ENCODE measurements at regions of chr1 and their contacts with region 1.

Region 1: DNA sequence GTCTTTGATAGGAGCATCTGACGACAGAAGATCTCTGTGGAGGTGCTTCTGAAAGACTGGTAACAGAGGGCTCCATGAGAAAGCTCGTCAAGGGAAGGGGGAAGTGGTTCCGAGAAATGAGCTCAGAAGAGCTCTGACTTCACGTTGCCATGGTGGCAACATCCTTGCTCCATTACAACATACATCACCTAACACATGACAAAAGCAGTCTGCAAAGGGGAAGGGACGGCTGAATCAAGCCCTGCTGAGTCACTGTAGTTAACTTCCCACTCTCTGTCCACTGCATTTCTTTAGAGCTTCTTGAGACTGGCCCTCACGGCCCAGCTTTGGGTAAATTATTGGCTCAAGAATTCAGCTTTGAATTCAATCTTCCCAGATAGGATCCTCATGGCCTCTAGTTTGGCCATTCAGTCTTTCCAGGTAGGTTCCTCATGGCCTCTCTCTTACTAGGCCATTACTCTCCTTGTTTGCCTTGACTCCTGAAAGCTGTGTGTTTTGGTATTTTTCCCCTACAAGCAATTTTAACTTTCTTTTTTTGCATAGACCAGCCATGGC is 88.0 kb upstream of the ZNF648 start:
- DNase-seq: peak; percentile 37
- H3K4me3 ChIP-seq: no peak overlapping the region
- H3K27ac ChIP-seq: peak overlapping the region in 2 of 4 donors; percentile 52 to 87
- H3K4me1 ChIP-seq: peaks cover 7 to 15% (median 13%) of the 10 kb centered on the region in 4 donors
- H3K27me3 ChIP-seq: no peaks in the 10 kb centered on the region
- CTCF ChIP-seq: no peak
- EP300 ChIP-seq: no peak
- POLR2A ChIP-seq: no peak

Region 2: GRCh38 chr1:182198049-182198501 is 48.6 kb after region 1 on chr1:
- in situ Hi-C with region 1: loop called in 1 of 4 experiments (anchors 5 kb)
- intact Hi-C with region 1: no loop called
- DNase-seq: no peak
- H3K4me3 ChIP-seq: no peak overlapping the region
- H3K27ac ChIP-seq: peak overlapping the region; percentile 37 to 61 (median 52)
- H3K4me1 ChIP-seq: no peaks in the 10 kb centered on the region
- H3K27me3 ChIP-seq: no peaks in the 10 kb centered on the region
- CTCF ChIP-seq: peak in 3 of 5 experiments; percentile 17 to 37 (median 25)
- EP300 ChIP-seq: no peak
- POLR2A ChIP-seq: no peak

Region 3: GRCh38 chr1:182301467-182302198 is 152.1 kb after region 1 on chr1:
- in situ Hi-C with region 1: no loop called
- intact Hi-C with region 1: no loop called
- DNase-seq: peak; percentile 48
- H3K4me3 ChIP-seq: no peak overlapping the region
- H3K27ac ChIP-seq: peak overlapping the region; percentile 47 to 67 (median 54)
- H3K4me1 ChIP-seq: peaks cover 14 to 40% (median 30%) of the 10 kb centered on the region in 4 donors
- H3K27me3 ChIP-seq: no peaks in the 10 kb centered on the region
- CTCF ChIP-seq: peak in 2 of 5 experiments; percentile 14 to 26
- EP300 ChIP-seq: no peak
- POLR2A ChIP-seq: no peak

Region 4: DNA sequence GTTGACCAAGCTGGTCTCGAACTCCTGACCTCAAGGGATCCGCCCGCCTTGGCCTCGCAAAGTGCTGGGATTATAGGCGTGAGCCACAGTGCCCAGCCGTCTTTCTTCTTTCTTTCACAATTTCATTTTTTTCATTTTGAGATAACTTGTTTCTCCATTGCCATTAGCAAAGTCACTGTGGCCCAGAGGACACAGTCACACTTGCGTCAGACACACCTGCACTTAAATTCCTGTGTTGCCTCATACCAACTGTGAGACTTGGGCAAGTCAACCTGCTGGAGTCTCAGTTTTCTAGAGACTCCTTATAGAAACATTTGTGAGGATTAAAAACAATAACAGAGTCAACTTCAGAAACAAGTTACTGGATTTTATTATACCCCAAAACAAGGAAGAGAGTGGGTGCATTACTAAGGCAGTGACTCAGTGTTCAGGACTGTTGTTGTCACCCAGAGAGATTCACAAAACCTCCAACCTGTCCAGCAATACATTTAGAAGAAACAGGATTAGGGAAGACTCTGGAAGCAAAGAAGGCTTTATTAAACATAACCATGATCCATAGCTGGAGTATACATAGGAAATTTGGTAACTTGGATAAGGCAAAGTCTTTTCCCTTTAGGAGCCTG is 248.4 kb after region 1 on chr1:
- in situ Hi-C with region 1: loop called (anchors 5 to 10 kb)
- intact Hi-C with region 1: no loop called
- DNase-seq: no peak
- H3K4me3 ChIP-seq: no peak overlapping the region
- H3K27ac ChIP-seq: peak overlapping the region in 1 of 4 donors; percentile 7
- H3K4me1 ChIP-seq: peaks cover 4 to 27% (median 10%) of the 10 kb centered on the region in 4 donors
- H3K27me3 ChIP-seq: no peaks in the 10 kb centered on the region
- CTCF ChIP-seq: no peak
- EP300 ChIP-seq: no peak
- POLR2A ChIP-seq: no peak

Measured in transverse colon (tissue), 4 donors.